Head of caudate nucleus (tissue), 42 donors: ENCODE measurements at regions of chr7 and their contacts with region 1.

Region 1: DNA sequence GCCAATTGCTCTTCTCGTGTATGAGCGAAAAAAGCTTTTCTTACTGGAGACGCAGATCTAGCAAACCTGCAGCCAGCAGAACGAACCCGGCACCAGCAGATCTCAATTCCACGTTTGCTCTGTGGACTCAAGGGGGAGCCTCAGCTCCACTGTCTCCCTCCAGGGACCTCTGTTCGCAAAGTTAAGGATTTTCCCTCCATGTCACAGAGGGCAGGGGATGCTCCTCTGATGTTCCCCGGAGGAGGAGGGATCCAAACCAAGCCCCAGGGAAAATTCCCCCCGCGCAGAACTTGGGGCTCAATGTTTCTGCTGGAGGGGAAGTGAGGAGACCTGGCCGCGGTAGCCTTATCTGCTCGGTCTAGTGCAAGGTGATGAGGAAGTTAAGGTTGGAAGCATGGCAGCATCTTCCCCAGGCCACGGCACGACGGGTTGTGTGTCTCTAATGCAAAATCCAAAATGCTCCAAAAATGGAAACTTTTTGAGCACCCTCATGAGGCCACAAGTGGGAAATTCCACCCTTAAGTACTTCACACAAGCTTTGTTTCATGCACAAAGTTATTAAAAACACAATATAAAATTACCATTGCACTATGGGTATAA is 9.0 kb downstream of the IQCE start:
- DNase-seq: peak; percentile 49 to 90 (median 71)

Region 2: DNA sequence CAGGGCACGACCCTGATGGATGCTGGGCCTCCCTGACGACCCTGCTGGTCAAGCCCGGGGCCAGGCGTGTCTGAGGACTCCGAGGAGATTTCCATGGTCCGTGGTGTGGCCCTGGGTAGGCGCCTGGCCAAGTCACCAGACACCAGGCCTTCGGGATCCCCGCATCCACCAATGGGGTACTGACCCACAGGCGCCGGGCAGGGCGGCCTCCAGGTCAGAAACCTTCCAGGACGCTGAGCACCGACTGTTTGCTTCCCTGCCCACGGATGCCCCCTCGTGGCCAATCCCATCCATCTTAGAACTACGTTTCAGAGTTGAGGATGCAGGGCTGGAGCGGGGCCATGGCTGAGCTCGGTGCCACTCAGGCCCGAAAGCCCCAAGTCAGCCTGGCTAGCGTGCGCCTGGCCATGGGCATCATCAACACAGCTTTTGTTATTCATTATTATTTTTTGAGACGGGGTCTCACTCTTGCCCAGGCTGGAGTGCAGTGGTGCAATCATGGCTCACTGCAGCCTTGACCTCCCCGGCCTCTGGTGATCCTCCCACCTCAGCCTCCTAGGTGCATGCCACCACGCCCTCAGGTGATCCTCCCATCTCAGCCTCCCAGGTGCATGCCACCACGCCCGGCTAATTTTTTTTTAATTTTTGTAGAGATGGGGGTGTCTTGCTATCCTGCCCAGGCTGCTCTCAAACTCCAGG is 113.2 kb after region 1 on chr7:
- intact Hi-C with region 1: loop called (anchors 10 kb)
- DNase-seq: peak; percentile 81 to 97 (median 90)